Right ventricle myocardium superior (tissue), 1 donor: ENCODE measurements at regions of chr5 and their contacts with region 1.

Region 1: GRCh38 chr5:64634997-64635686 is 55.2 kb upstream of the SHISAL2B start:
- DNase-seq: no peak
- ATAC-seq: no peak

Region 2: DNA sequence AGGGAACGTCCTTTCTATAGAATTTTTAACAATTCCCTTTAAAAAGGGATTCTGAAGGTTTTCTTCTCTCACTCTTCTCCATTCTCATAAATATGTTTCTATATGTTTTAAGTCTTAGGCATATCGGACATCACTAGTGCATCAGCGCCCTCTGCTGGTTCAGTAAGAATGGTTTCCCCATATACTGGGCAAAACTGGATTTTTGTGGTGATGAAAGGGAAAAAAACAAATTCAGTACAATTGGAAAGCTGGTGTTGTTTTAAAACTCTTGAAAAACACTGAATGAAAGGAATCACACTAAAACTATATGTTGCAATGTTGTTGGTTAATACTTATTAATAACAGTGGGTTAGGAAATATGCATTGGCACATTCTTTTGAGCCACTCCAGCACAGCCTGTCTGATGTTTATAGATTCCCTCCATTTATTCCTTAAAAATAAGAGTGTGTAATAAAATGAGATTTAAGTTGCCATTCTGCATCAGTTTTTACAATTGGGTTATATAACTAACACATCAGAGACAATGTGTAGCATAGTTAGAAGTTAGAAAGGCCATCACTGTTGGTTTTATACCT is 149.4 kb after region 1 on chr5:
- intact Hi-C with region 1: loop called (anchors 5 kb)
- DNase-seq: peak; percentile 50
- ATAC-seq: peak; percentile 77